ENCODE measurements at regions of chr10 and their contacts with region 1.

Region 1: DNA sequence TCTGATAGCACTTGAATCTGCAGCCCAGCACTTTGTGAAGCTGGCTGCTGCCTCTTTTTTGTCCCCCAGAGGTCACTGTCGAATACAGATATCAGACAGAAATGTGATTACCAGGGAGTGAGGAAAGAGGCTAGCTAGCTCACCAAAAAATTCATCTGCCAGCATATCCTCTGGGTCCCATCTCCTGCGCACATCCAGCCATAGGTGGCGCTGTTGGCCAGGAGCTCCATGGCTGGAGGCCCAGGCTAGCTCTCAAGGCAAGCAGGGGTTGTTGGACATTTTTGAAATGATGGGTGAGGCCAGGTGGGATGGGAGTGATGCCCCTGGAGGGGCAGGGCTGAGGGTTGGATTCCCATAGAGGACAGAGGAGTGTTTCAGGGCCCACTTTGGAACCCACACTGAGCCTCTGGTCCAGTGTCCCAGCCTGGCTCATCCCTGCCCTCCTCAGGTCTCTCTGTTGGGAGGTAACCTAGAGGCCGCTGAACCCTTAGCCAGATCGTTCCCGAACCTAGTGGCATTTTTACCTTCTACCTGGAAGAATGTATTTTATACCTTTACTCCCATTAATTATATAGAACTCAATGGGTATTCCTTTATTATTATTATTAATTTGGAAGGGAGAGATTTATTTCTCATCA is 14.8 kb downstream of the DPCD start:
- DNase-seq: peak; percentile 33
- H3K4me3 ChIP-seq: no peak overlapping the region
- H3K27ac ChIP-seq: no peak overlapping the region
- H3K27me3 ChIP-seq: no peaks in the 10 kb centered on the region
- CTCF ChIP-seq: peak; percentile 94

Region 2: DNA sequence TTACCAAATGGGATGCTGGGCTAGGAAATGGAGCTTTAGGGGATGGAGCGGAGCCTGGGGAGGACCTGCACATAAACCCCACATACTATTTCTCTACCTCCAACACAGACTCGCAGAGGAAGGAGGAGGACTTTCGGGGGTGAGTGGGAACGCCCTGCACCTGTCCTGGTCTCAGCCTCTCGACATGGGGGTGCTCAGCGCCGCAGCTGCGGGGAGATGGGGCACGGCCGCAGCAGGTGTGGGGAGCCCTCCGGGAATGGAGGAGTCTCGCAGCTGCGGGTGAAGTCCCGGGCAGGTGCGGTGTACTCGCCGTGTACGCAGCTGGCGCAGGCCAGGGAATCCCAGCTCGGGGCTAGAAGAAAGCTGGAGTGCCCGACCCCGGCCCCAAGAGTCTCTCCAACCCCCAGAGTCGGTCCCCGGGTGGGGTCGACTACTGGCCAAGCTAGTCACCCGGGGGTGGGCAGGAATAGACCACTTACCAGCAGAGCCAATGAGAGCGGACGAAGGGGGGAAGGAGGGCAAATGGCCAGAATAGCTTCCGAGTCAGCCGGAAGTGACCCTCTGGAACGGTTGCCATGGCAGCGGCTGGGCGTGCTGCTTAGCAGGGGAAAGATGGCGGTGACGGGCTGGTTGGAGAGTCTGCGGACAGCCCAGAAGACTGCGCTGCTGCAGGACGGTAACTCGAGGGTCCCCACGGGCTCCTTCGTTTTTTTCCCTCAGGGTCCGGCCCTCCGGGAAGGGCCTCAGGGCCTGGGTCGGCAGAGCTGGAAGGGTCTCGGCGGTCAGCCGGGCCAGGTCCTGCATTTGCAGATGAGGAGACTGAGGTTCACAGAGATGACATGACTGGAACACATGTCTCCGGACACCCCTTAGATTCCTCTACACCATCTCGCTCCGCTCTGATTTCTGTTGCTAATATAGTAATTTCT is 14.9 kb before region 1 on chr10 and contains the starts of genes DPCD and POLL:
- CTCF ChIA-PET with region 1: interaction called, 19 read pairs
- POLR2A ChIA-PET with region 1: interaction called, 7 read pairs
- DNase-seq: peak; percentile 81
- H3K4me3 ChIP-seq: peak within 1 kb of the TSS; percentile 99
- H3K27ac ChIP-seq: no peak within 1 kb of the TSS
- H3K27me3 ChIP-seq: no peaks in the 10 kb centered on the region
- CTCF ChIP-seq: no peak
- polyA plus RNA-seq, gene DPCD: 49.7 and 51.1 TPM in 2 replicates
- polyA plus RNA-seq, gene POLL: 14.8 and 16.4 TPM in 2 replicates

Region 3: GRCh38 chr10:101617102-101617823 is 14.4 kb after region 1 on chr10:
- CTCF ChIA-PET with region 1: interaction called, 16 read pairs
- POLR2A ChIA-PET with region 1: no interaction called
- DNase-seq: no peak
- H3K4me3 ChIP-seq: no peak overlapping the region
- H3K27ac ChIP-seq: no peak overlapping the region
- H3K27me3 ChIP-seq: no peaks in the 10 kb centered on the region
- CTCF ChIP-seq: peak; percentile 32

Region 4: GRCh38 chr10:101774589-101775272 is 171.9 kb after region 1 on chr10:
- CTCF ChIA-PET with region 1: interaction called, 127 read pairs
- POLR2A ChIA-PET with region 1: interaction called, 4 read pairs
- DNase-seq: no peak
- H3K4me3 ChIP-seq: no peak overlapping the region
- H3K27ac ChIP-seq: no peak overlapping the region
- H3K27me3 ChIP-seq: peaks cover 70% of the 10 kb centered on the region
- CTCF ChIP-seq: no peak

Region 5: DNA sequence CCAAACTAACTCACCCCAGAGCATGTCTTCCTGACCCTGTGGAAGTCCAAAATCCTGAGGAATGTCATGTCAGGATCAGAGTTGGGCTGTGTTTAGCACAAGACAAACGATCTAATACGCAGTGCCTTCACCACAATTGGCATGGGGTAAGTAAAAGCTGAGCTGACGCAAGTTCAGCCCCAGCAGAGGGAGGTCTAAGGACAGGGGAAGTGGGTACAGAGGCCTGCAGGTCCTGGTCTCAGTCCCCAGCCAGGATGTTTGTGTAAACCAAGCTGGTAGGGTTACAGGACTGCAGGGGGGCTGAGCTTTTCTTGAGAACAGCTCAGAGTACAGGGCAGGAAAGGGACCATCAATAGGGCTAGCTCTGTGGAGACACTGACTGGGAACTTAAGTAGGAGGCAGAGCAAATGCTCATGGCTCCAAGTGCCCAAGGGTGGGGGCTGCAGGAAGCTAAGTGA is 246.0 kb after region 1 on chr10:
- CTCF ChIA-PET with region 1: no interaction called
- POLR2A ChIA-PET with region 1: no interaction called
- DNase-seq: no peak
- H3K4me3 ChIP-seq: no peak overlapping the region
- H3K27ac ChIP-seq: no peak overlapping the region
- H3K27me3 ChIP-seq: peaks cover 3% of the 10 kb centered on the region
- CTCF ChIP-seq: no peak

Measured in AG04450 (cell line).